OCI-LY7 (cell line): ENCODE measurements at regions of chr2 and their contacts with region 1.

Region 1: GRCh38 chr2:148020111-148021058 is at the start of gene ORC4:
- DNase-seq: peak; percentile 99
- H3K4me3 ChIP-seq: peak within 1 kb of the TSS; percentile 91
- H3K27ac ChIP-seq: peak within 1 kb of the TSS; percentile 84
- H3K4me1 ChIP-seq: peaks cover 35% of the 10 kb centered on the region
- CTCF ChIP-seq: 0 out of 2 replicates have a peak, but pooled peaks have one; percentile 36
- total RNA-seq, gene ORC4: 20.3 and 21.0 TPM in 2 replicates

Region 2: DNA sequence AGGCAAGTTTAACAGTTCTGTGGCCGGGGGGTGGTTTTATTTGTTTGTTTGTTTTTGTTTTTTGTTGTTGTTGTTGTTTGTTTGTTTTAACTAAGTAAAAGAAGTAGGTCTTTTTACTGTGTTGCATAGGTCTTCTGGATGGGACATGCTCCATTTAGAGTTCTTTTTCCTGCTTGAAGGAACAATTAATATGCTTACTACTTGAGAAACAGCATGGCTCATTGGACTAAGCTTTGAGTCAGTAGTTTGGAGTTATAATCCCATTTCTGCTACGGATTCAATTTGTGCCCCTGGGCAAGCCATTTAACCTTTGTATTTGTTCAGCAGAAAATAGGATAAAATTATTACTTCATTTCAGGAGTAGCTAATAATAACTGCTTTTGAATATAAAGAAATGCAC is 184.3 kb before region 1 on chr2:
- CTCF ChIA-PET with region 1: no interaction called
- POLR2A ChIA-PET with region 1: no interaction called
- intact Hi-C with region 1: no loop called
- DNase-seq: no peak
- H3K4me3 ChIP-seq: no peak overlapping the region
- H3K27ac ChIP-seq: no peak overlapping the region
- H3K4me1 ChIP-seq: no peaks in the 10 kb centered on the region
- CTCF ChIP-seq: no peak

Region 3: DNA sequence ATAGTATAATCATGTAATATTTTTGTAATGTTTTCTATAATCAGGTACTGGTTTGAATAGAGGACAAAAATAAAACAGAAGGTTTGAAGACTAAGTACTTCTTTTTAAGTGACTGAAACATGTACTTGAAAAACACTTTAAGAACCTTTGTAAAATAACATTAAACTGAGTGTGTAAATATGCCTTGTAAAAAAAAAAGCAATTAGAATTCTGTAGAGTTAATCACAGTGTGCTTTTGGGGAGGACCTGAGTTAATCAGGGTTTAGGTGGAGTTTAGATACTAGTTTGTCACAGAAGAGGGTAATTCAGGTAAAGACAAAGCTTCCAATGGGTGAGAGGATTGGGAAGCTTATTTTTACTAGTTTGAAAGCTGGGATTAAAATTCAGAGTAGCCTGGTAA is 10.8 kb after region 1 on chr2:
- CTCF ChIA-PET with region 1: no interaction called
- POLR2A ChIA-PET with region 1: interaction called, 13 read pairs
- intact Hi-C with region 1: no loop called
- DNase-seq: no peak
- H3K4me3 ChIP-seq: no peak overlapping the region
- H3K27ac ChIP-seq: no peak overlapping the region
- H3K4me1 ChIP-seq: no peaks in the 10 kb centered on the region
- CTCF ChIP-seq: no peak

Region 4: DNA sequence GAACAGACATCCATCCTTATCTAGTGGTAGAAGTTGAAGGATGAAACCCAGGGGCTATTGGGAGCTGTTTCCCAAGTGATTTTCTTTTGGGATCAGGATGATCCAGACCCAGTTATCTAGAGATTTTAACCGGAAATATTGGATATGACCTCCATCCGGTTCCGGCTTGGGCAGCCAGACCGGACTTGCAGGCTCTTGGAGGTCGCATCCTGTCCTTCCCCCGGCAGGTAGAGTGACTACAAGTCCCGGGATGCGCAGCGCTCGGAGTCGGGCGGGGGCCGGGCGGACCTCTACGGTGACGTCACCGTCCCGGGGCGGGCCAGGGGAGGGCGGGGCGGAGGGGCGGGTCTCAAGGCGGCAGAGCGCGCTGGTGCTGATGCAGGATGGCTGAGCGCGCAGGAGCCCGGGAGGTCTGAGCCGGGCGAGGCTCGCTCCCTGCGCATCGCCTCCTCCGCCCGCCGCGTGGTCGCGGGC is 854.5 kb after region 1 on chr2 and contains the start of gene KIF5C:
- CTCF ChIA-PET with region 1: no interaction called
- POLR2A ChIA-PET with region 1: interaction called, 5 read pairs
- intact Hi-C with region 1: loop called (anchors 5 kb)
- DNase-seq: peak; percentile 95
- H3K4me3 ChIP-seq: peak within 1 kb of the TSS; percentile 74
- H3K27ac ChIP-seq: no peak within 1 kb of the TSS
- H3K4me1 ChIP-seq: peaks cover 18% of the 10 kb centered on the region
- CTCF ChIP-seq: no peak
- total RNA-seq, gene KIF5C: 8.1 and 15.2 TPM in 2 replicates

Region 5: DNA sequence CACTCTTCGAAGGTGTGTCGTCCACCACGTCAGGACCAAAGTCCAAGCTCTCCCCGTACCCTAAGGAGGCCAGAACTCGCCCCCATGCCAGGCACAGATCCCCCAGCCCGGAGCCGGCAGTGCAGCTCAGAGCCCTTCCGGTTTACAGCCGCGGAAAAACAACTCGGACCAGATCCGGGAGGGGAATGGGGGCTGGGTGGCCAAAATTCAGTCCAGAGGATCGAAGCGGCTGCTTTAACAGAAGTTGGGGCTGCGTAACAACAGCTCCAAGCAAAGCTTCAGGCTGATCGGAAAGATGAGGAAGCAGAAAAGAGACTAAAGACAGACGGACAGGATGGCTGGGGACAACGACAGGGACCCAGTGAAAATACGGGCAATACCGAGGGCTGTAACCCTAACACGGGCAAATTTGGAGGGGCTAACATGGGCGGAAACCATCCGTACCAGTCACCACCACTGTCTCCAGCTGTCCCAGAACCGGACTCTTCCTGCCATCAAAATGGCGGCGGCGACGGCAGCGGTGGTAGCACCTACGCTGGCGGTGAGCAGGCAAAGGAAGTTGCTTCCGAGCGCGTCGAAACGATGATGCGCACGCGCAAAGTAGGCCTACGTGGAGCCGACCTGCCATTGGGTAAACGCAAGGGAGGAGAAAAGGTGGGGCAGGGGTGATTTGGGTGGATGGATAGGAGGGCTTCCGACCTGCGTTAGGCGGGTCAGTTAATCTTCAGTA is 1567.0 kb after region 1 on chr2 and contains the start of gene MMADHC:
- CTCF ChIA-PET with region 1: no interaction called
- POLR2A ChIA-PET with region 1: no interaction called
- intact Hi-C with region 1: loop called (anchors 2 kb)
- DNase-seq: peak; percentile 97
- H3K4me3 ChIP-seq: peak within 1 kb of the TSS; percentile 94
- H3K27ac ChIP-seq: peak within 1 kb of the TSS; percentile 88
- H3K4me1 ChIP-seq: peaks cover 20% of the 10 kb centered on the region
- CTCF ChIP-seq: no peak
- total RNA-seq, gene MMADHC: 68.5 and 73.6 TPM in 2 replicates